CD4-positive, alpha-beta T cell (primary cell): ENCODE measurements at regions of chr7 and their contacts with region 1.

Region 1: DNA sequence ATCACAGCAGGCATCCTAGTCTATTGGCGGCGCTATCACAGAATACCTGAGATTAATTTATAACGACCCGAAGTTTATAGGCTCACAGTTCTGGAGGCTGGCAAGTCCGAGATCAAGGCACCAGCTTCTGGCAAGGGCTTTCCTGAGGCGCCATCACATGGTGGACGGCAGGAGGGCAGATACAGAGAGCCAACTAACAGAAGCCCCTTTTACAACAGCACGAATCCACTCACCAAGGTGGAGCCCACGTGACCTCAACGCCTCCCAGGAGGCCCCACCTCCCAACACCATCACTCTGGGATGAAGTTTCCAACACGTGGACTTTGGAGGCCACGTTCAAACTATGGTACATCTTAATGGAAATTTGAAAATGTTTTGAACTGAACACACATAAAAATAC is 255.3 kb downstream of the ELFN1 start:
- DNase-seq: peak in 3 of 14 experiments; percentile 26 to 46 (median 27)
- ATAC-seq: no peak
- H3K4me3 ChIP-seq: peak overlapping the region; percentile 19
- H3K4me3 Mint-ChIP-seq: peak overlapping the region; percentile 67
- H3K27ac ChIP-seq: peak overlapping the region; percentile 25 to 76
- H3K27ac Mint-ChIP-seq: peak overlapping the region; percentile 89
- H3K4me1 ChIP-seq: peaks cover 78% of the 10 kb centered on the region
- H3K4me1 Mint-ChIP-seq: peaks cover 84% of the 10 kb centered on the region
- H3K27me3 ChIP-seq: no peaks in the 10 kb centered on the region
- H3K27me3 Mint-ChIP-seq: no peaks in the 10 kb centered on the region
- CTCF ChIP-seq: peak; percentile 26

Region 2: DNA sequence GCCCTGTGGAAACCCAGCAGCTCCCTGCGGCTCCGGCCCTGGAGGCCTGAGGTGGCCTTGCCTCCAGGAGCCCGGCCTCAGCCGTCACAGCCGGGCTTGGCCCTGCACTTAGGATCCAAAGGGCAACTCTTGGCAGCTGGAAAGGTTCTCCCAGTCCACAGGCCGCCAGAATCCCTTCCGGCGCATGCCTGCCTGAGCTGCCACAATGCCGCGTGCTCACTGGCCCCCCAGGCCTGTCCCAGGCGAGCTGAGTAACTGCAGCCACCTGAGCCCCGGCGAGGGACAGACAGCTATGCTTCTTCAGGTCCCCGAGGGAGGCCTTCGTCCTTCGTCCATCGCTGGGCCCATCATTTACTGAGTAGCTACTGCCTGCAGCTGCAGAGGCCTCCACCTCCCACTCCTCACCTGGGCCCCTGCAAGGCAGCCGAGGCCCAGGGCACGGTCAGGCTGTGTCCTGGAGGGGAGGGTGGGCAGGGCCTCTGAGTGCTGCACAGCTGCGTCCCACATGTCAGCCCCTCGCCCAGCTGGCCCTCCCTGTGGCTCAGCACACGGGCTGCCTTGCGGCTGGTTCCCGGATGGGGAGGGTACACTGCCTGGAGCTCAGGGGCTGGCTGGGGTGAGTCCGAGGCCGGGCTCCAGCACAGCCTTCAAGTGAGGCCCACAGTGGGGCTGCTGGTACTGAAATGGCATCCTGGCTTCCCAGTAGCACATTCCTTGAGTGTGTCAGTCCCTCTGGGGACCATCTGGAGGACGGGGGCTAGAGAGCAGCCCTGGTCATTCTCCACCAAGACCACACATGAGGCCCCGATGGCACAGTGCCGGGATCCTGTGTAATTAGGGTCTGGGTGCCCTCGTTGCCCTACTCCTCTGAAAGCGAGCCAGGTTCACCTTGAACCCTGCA is 82.8 kb before region 1 on chr7:
- CTCF ChIA-PET with region 1: no interaction called
- POLR2A ChIA-PET with region 1: no interaction called
- intact Hi-C with region 1: no loop called
- DNase-seq: no peak
- ATAC-seq: no peak
- H3K4me3 ChIP-seq: no peak overlapping the region
- H3K4me3 Mint-ChIP-seq: no peak overlapping the region
- H3K27ac ChIP-seq: no peak overlapping the region
- H3K27ac Mint-ChIP-seq: no peak overlapping the region
- H3K4me1 ChIP-seq: no peaks in the 10 kb centered on the region
- H3K4me1 Mint-ChIP-seq: peaks cover 5% of the 10 kb centered on the region
- H3K27me3 ChIP-seq: no peaks in the 10 kb centered on the region
- H3K27me3 Mint-ChIP-seq: no peaks in the 10 kb centered on the region
- CTCF ChIP-seq: no peak

Region 3: GRCh38 chr7:1889556-1890181 is 35.7 kb before region 1 on chr7:
- CTCF ChIA-PET with region 1: no interaction called
- POLR2A ChIA-PET with region 1: no interaction called
- intact Hi-C with region 1: loop called in 1 of 2 experiments (anchors 5 kb)
- DNase-seq: peak in 3 of 14 experiments; percentile 8 to 42 (median 30)
- ATAC-seq: peak; percentile 65
- H3K4me3 ChIP-seq: no peak overlapping the region
- H3K4me3 Mint-ChIP-seq: peak overlapping the region; percentile 30
- H3K27ac ChIP-seq: no peak overlapping the region
- H3K27ac Mint-ChIP-seq: peak overlapping the region; percentile 70
- H3K4me1 ChIP-seq: peaks cover 36% of the 10 kb centered on the region
- H3K4me1 Mint-ChIP-seq: peaks cover 51% of the 10 kb centered on the region
- H3K27me3 ChIP-seq: no peaks in the 10 kb centered on the region
- H3K27me3 Mint-ChIP-seq: no peaks in the 10 kb centered on the region
- CTCF ChIP-seq: no peak

Region 4: DNA sequence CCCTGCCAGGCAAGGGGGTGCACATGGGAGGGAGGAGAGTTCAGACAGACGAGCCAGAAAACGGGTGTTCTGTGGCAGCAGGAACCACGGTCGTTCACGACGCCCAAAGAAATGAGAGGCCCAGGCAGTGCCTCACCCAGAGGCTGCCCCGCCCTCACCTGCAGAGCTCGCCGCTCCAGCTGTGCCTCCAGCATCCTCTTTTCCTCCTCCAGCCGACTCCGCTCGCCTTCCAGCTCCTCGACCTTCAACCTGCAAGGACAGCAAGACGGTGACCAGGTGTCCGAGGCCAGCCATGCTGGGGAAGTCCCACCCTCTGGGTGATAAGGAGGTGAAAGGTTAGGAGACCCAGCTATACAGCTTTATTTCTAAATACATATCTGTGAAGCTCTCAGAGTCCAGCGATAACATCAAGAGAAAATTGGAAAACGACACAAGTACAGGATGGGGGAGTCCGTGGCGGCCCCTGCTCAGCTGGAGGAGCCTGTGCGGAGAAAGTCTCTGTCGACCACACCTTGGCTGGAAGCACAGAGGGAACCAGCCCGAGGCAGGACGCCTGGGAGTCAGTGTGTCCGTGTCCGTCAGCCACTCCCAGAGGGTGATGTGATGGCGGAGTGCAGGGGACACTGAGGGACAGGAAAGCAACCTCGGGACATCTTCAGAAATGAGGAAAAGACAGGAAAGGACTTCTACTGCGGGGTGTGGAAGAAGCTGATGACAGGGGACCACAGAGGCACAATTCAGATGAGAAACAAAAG is 32.3 kb after region 1 on chr7:
- CTCF ChIA-PET with region 1: interaction called, 3 read pairs
- POLR2A ChIA-PET with region 1: no interaction called
- intact Hi-C with region 1: loop called in 1 of 2 experiments (anchors 1 kb)
- DNase-seq: peak in 1 of 14 experiments; percentile 2
- ATAC-seq: no peak
- H3K4me3 ChIP-seq: no peak overlapping the region
- H3K4me3 Mint-ChIP-seq: no peak overlapping the region
- H3K27ac ChIP-seq: no peak overlapping the region
- H3K27ac Mint-ChIP-seq: no peak overlapping the region
- H3K4me1 ChIP-seq: no peaks in the 10 kb centered on the region
- H3K4me1 Mint-ChIP-seq: peaks cover 9% of the 10 kb centered on the region
- H3K27me3 ChIP-seq: no peaks in the 10 kb centered on the region
- H3K27me3 Mint-ChIP-seq: no peaks in the 10 kb centered on the region
- CTCF ChIP-seq: no peak

Region 5: GRCh38 chr7:1969459-1970284 is 44.3 kb after region 1 on chr7:
- CTCF ChIA-PET with region 1: interaction called, 3 read pairs
- POLR2A ChIA-PET with region 1: interaction called, 10 read pairs
- intact Hi-C with region 1: no loop called
- DNase-seq: no peak
- ATAC-seq: peak; percentile 32
- H3K4me3 ChIP-seq: no peak overlapping the region
- H3K4me3 Mint-ChIP-seq: peak overlapping the region; percentile 21
- H3K27ac ChIP-seq: no peak overlapping the region
- H3K27ac Mint-ChIP-seq: peak overlapping the region; percentile 67
- H3K4me1 ChIP-seq: peaks cover 2% of the 10 kb centered on the region
- H3K4me1 Mint-ChIP-seq: peaks cover 16% of the 10 kb centered on the region
- H3K27me3 ChIP-seq: no peaks in the 10 kb centered on the region
- H3K27me3 Mint-ChIP-seq: no peaks in the 10 kb centered on the region
- CTCF ChIP-seq: no peak

Region 6: DNA sequence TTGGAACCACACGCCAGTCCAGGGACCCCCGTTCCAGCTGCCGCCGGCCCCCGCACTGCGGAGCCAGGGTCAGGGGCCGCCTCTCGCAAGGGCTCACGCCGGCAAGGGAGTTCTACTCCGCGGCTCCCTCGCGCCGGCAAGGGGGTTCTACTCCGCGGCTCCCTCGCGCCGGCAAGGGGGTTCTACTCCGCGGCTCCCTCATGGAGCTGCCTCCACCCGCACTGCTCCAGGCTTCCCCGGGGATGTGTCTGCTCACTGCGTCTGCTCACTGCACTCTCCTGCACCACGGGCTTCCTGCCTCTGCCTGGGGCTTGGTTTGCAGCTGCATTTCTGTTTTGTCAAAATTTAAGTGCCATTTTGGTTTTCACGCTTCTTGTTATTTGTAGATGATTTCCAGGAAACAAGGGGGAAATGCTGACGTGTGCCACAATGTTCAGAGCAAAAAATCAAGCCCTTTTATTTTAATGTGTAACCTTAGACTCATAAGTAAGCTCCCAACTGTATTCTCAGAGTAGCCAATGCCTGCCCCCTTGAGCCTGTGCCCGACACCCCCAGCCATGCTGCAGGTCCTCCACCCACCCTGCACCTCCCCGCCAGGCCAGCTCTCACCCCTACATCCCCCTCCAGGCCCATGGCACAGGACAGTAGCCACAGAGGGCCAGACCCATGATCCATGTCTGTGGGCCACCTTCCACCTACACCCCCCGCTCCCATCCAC is 61.2 kb after region 1 on chr7:
- CTCF ChIA-PET with region 1: no interaction called
- POLR2A ChIA-PET with region 1: interaction called, 11 read pairs
- intact Hi-C with region 1: loop called in 1 of 2 experiments (anchors 5 kb)
- DNase-seq: peak in 8 of 14 experiments; percentile 11 to 77 (median 42)
- ATAC-seq: peak; percentile 87
- H3K4me3 ChIP-seq: no peak overlapping the region
- H3K4me3 Mint-ChIP-seq: peak overlapping the region; percentile 69
- H3K27ac ChIP-seq: no peak overlapping the region
- H3K27ac Mint-ChIP-seq: peak overlapping the region; percentile 91
- H3K4me1 ChIP-seq: peaks cover 35% of the 10 kb centered on the region
- H3K4me1 Mint-ChIP-seq: peaks cover 38% of the 10 kb centered on the region
- H3K27me3 ChIP-seq: no peaks in the 10 kb centered on the region
- H3K27me3 Mint-ChIP-seq: no peaks in the 10 kb centered on the region
- CTCF ChIP-seq: no peak

Region 7: GRCh38 chr7:2037808-2038522 is 112.6 kb after region 1 on chr7:
- CTCF ChIA-PET with region 1: no interaction called
- POLR2A ChIA-PET with region 1: interaction called, 18 read pairs
- intact Hi-C with region 1: loop called in 1 of 2 experiments (anchors 5 kb)
- DNase-seq: peak in 7 of 14 experiments; percentile 14 to 57 (median 31)
- ATAC-seq: peak; percentile 41
- H3K4me3 ChIP-seq: peak overlapping the region; percentile 65
- H3K4me3 Mint-ChIP-seq: peak overlapping the region; percentile 80
- H3K27ac ChIP-seq: peak overlapping the region; percentile 23 to 58
- H3K27ac Mint-ChIP-seq: peak overlapping the region; percentile 86
- H3K4me1 ChIP-seq: peaks cover 34% of the 10 kb centered on the region
- H3K4me1 Mint-ChIP-seq: peaks cover 66% of the 10 kb centered on the region
- H3K27me3 ChIP-seq: no peaks in the 10 kb centered on the region
- H3K27me3 Mint-ChIP-seq: no peaks in the 10 kb centered on the region
- CTCF ChIP-seq: no peak